AG04449 (cell line): ENCODE measurements at regions of chr11 and their contacts with region 1.

Region 1: GRCh38 chr11:11787305-11788062 is 54.3 kb upstream of the USP47 start:
- DNase-seq: no peak
- H3K4me3 ChIP-seq: no peak overlapping the region
- CTCF ChIP-seq: peak; percentile 64

Region 2: DNA sequence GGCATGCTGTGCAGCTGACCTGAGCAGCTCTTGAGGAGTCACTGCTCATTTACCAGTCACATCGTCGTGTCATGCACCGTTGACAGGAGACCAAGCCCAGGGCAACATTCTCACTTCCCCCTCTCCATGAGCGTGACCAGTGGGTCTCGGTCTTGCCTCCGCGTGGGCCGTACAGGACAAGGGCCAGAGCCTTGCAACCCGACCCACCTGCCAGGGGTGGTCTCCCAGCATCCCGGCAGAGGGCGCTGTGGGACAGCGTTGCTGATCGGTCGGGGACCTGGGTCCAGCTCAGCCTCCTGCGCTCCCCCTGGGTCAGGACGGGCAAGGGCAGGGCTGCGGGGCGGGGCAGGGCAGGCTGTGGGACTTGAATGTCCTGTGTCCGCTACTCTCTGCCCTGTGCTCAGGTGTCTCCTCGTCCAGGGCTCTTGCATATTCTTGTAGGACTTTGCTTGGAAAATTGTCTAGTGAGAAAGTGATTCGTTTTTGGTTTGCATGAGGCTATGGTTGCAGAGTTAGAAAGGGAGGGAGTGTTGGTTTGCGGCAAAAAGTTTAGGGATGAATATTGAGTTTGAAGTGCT is 995.0 kb before region 1 on chr11:
- CTCF ChIA-PET with region 1: interaction called, 24 read pairs
- POLR2A ChIA-PET with region 1: no interaction called
- DNase-seq: no peak
- H3K4me3 ChIP-seq: no peak overlapping the region; the same call in 1 of the 2 replicates
- CTCF ChIP-seq: peak; percentile 99

Region 3: GRCh38 chr11:10943968-10944367 is 843.5 kb before region 1 on chr11:
- CTCF ChIA-PET with region 1: interaction called, 35 read pairs
- POLR2A ChIA-PET with region 1: no interaction called
- DNase-seq: no peak
- H3K4me3 ChIP-seq: no peak overlapping the region
- CTCF ChIP-seq: no peak

Region 4: DNA sequence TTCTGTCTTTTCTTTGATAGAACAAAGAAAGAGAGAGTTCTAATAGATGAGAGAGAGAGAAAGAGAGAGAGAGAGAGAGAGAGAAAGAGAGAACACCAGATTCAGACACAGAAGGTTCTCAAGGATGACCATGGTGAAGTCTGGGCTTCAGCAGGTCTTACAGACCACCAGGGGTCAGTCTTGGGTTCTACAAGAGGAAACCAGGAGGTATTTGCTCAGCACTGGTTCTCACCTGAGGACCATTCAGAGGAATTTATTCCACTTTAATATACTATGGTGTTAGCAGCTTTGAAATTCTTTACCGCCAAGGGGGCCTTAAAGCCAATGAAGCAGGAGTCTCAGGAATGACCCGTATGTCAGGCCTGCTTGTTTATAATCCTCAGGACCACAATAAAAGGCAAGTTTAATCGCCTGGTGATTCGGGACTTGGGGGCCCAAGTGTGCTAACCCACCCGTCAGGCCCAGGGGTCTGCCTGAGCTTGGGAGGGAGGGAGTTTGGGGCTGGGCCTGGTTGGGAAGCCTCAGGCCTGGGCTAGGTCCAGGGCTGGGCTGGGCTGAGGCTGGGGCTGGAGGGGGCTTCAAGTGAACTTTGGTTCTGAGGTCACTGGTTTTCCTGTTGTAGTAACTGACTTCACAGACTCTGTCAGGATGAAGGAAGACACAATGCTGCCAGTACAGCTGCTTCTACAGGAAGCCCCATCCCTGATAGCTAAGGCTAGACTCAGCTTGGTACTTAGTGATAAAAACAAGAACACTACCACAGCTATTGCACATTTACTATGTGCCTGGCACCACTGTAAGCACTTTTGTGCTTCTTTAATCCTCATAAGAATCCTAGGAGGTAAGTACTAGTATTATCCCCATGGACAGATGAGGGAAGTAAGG is 750.4 kb before region 1 on chr11:
- CTCF ChIA-PET with region 1: interaction called, 154 read pairs
- POLR2A ChIA-PET with region 1: no interaction called
- DNase-seq: no peak
- H3K4me3 ChIP-seq: no peak overlapping the region
- CTCF ChIP-seq: peak; percentile 58

Region 5: DNA sequence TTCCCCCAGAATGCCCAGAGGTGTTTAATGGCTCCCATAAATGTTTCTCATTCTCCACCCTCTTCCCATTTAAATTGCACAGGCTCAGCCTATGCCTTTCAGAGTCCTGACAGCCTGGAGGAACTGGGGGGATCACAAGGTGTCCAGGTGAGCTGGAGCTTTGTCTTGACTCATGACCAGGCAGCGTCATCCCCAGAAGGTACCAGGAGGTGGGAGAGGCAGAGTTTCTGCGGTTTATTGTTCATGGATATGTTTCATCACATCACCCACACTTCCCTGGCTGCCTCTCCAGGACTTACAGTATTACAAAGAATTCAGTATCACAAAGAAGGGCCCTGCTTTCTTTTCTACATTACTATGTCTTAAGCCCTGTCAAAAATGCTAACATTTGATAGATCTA is 62.5 kb before region 1 on chr11:
- CTCF ChIA-PET with region 1: no interaction called
- POLR2A ChIA-PET with region 1: no interaction called
- DNase-seq: no peak
- H3K4me3 ChIP-seq: no peak overlapping the region
- CTCF ChIP-seq: no peak

Region 6: GRCh38 chr11:11798586-11799438 is 11.3 kb after region 1 on chr11:
- CTCF ChIA-PET with region 1: interaction called, 27 read pairs
- POLR2A ChIA-PET with region 1: no interaction called
- DNase-seq: no peak
- H3K4me3 ChIP-seq: no peak overlapping the region
- CTCF ChIP-seq: peak; percentile 88